ENCODE measurements at regions of chr7 and their contacts with region 1.

Region 1: GRCh38 chr7:112449902-112450806 is at the start of gene IFRD1:
- DNase-seq: peak; percentile 94
- ATAC-seq: peak; percentile 83
- H3K4me3 ChIP-seq: peak within 1 kb of the TSS; percentile 95
- H3K27ac ChIP-seq: peak within 1 kb of the TSS; percentile 92
- H3K4me1 ChIP-seq: peaks cover 4% of the 10 kb centered on the region; the same call in 1 of the 2 replicates
- H3K27me3 ChIP-seq: no peaks in the 10 kb centered on the region
- CTCF ChIP-seq: no peak
- EP300 ChIP-seq: no peak
- POLR2A ChIP-seq: peak; percentile 98
- RAD21 ChIP-seq: no peak
- polyA plus RNA-seq, gene IFRD1: 9.6 to 12.0 TPM

Region 2: DNA sequence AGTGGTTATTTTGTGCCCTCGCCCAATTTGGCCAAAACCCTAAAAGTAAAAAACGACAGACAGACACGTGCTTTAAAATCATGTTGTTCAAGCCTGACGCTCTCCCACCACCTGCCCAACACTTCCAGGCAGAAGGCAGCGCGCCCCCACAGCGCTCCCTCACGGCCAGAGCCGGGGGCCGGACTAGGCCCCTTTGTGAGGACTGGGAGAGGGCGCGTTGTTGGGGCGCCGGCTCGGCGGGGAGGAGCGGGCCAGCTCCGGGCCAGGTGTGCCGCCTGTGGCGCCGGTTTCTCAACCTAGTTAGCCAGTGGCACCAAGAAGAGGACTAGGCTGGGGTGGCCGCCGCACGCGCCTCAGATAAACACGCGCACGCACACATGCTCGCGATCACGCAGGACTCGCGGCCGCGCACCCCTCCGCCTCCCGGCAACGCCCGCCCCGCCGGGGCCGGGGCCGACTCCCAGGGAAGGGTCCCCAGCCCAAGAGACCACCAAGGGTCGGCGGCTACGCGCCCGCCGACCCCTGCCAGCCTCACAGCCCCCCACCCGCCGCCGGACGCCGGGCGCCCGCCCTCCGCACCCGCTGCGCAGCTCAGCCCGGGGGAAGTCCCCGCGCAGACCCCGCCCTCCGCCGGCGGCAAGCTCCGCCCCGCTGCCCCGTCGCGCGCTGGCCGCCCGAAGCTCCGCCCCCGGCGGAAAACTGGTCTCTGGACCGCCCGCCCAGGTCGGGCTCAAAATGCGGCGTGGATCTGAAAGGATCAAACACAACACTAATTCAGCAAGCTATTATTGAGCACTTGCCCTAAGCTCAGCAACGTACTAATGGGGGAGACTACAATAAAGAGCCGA is 888.0 kb before region 1 on chr7 and contains the start of gene IMMP2L:
- CTCF ChIA-PET with region 1: no interaction called
- POLR2A ChIA-PET with region 1: no interaction called
- RAD21 ChIA-PET with region 1: no interaction called
- SMC1A ChIA-PET with region 1: no interaction called
- in situ Hi-C with region 1: no loop called
- intact Hi-C with region 1: loop called (anchors 10 kb)
- DNase-seq: peak; percentile 46
- ATAC-seq: peak; percentile 90
- H3K4me3 ChIP-seq: peak within 1 kb of the TSS; percentile 71
- H3K27ac ChIP-seq: peak within 1 kb of the TSS; percentile 84
- H3K4me1 ChIP-seq: peaks cover 11% of the 10 kb centered on the region
- H3K27me3 ChIP-seq: no peaks in the 10 kb centered on the region
- CTCF ChIP-seq: peak; percentile 41 to 51 (median 44); a peak in 4 of 6 replicates
- EP300 ChIP-seq: no peak
- POLR2A ChIP-seq: peak; percentile 83
- RAD21 ChIP-seq: peak; percentile 65
- polyA plus RNA-seq, gene IMMP2L: 41.8 to 46.3 TPM

Region 3: DNA sequence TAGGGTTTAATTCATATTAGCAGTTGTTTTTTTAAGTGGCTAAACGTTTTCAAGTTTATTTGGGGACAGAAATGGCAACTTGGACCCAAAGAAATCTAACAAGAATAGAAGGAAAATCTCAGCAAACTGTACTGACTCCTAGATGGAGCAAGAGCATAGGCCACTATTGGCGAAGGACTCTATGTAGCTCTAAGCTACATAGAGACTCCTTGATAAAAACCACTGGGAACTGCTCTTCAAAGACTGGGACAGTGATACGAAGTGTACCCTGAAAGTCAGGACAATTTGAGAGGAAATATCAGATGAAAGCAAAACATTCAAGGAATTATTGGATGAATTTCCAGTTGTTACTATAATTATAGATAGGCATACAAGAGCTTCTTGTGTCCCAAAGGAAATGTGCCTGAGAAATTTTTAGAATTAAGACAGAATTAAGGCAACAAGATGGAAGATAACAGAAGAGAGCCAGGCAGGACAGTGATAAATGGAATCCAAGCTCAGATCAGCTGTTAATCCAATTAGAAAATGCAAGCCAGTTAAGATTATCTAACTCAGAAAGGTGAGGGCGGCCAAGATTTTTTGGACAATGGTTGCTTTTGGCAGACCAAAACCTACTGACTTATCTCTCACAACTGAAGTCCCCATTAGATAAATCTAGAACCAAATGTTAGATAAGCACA is 103.6 kb before region 1 on chr7:
- CTCF ChIA-PET with region 1: no interaction called
- POLR2A ChIA-PET with region 1: no interaction called
- RAD21 ChIA-PET with region 1: no interaction called
- SMC1A ChIA-PET with region 1: no interaction called
- in situ Hi-C with region 1: no loop called
- intact Hi-C with region 1: no loop called
- DNase-seq: no peak
- ATAC-seq: no peak
- H3K4me3 ChIP-seq: no peak overlapping the region
- H3K27ac ChIP-seq: no peak overlapping the region
- H3K4me1 ChIP-seq: no peaks in the 10 kb centered on the region
- H3K27me3 ChIP-seq: no peaks in the 10 kb centered on the region
- CTCF ChIP-seq: no peak
- EP300 ChIP-seq: no peak
- POLR2A ChIP-seq: no peak
- RAD21 ChIP-seq: no peak

Region 4: DNA sequence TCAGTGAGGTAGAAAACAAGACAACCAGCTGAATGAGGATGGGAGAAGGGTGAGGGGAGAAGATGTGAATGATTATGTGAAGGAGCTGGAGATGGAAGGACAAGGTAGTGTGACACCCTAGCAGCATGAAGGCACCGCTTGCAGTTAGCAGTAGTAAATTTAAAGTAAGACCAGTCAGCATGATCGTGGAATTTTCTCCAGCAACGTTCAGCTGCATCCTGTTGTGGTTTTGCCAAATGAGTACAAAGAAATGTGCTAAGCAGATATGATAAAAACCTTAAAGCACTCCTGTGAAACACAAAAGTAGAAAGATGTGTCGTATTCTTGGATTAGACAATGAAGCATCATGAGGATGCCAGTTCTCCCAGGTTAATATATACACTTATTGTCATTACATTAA is 34.0 kb before region 1 on chr7:
- CTCF ChIA-PET with region 1: no interaction called
- POLR2A ChIA-PET with region 1: no interaction called
- RAD21 ChIA-PET with region 1: no interaction called
- SMC1A ChIA-PET with region 1: no interaction called
- in situ Hi-C with region 1: no loop called
- intact Hi-C with region 1: no loop called
- DNase-seq: no peak
- ATAC-seq: no peak
- H3K4me3 ChIP-seq: no peak overlapping the region
- H3K27ac ChIP-seq: no peak overlapping the region
- H3K4me1 ChIP-seq: no peaks in the 10 kb centered on the region
- H3K27me3 ChIP-seq: no peaks in the 10 kb centered on the region; a peak in 1 of 4 replicates
- CTCF ChIP-seq: no peak
- EP300 ChIP-seq: no peak
- POLR2A ChIP-seq: no peak
- RAD21 ChIP-seq: no peak

Region 5: GRCh38 chr7:112431803-112432202 is 18.4 kb before region 1 on chr7:
- CTCF ChIA-PET with region 1: no interaction called
- POLR2A ChIA-PET with region 1: no interaction called
- RAD21 ChIA-PET with region 1: no interaction called
- SMC1A ChIA-PET with region 1: no interaction called
- in situ Hi-C with region 1: no loop called
- intact Hi-C with region 1: no loop called
- DNase-seq: no peak
- ATAC-seq: no peak
- H3K4me3 ChIP-seq: no peak overlapping the region
- H3K27ac ChIP-seq: no peak overlapping the region
- H3K4me1 ChIP-seq: no peaks in the 10 kb centered on the region
- H3K27me3 ChIP-seq: no peaks in the 10 kb centered on the region
- CTCF ChIP-seq: no peak
- EP300 ChIP-seq: no peak
- POLR2A ChIP-seq: no peak
- RAD21 ChIP-seq: no peak

Region 6: DNA sequence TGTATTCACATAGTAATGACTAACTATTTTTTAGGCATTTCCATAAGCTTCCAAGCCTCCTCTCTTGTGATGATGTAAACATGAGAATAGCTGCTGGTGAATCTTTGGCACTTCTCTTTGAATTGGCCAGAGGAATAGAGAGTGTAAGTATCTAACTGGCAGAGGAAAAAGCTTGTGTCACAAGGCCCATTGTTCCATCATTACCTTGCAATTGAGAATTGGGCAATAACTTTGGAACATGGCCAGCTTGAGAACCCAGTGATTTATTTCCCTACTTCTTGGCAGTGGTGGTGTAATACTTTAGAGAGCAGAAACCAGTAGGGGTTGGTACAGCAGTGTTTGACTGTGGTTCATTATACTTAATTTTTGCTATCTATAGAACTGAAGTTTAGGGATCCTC is 12.1 kb after region 1 on chr7:
- CTCF ChIA-PET with region 1: interaction called, 10 read pairs
- POLR2A ChIA-PET with region 1: interaction called, 14 read pairs
- RAD21 ChIA-PET with region 1: interaction called, 5 read pairs
- SMC1A ChIA-PET with region 1: interaction called, 13 read pairs
- in situ Hi-C with region 1: no loop called
- intact Hi-C with region 1: no loop called
- DNase-seq: no peak
- ATAC-seq: no peak
- H3K4me3 ChIP-seq: no peak overlapping the region
- H3K27ac ChIP-seq: no peak overlapping the region
- H3K4me1 ChIP-seq: no peaks in the 10 kb centered on the region
- H3K27me3 ChIP-seq: no peaks in the 10 kb centered on the region
- CTCF ChIP-seq: no peak
- EP300 ChIP-seq: no peak
- POLR2A ChIP-seq: no peak
- RAD21 ChIP-seq: no peak

Region 7: GRCh38 chr7:112495810-112496462 is 45.8 kb after region 1 on chr7:
- CTCF ChIA-PET with region 1: interaction called, 11 read pairs
- POLR2A ChIA-PET with region 1: interaction called, 4 read pairs
- RAD21 ChIA-PET with region 1: interaction called, 3 read pairs
- SMC1A ChIA-PET with region 1: interaction called, 4 read pairs
- in situ Hi-C with region 1: no loop called
- intact Hi-C with region 1: no loop called
- DNase-seq: no peak
- ATAC-seq: peak; percentile 83
- H3K4me3 ChIP-seq: no peak overlapping the region
- H3K27ac ChIP-seq: no peak overlapping the region
- H3K4me1 ChIP-seq: no peaks in the 10 kb centered on the region; the same call in 1 of the 2 replicates
- H3K27me3 ChIP-seq: no peaks in the 10 kb centered on the region
- CTCF ChIP-seq: peak; percentile 49 to 74 (median 60); a peak in 5 of 6 replicates
- EP300 ChIP-seq: no peak
- POLR2A ChIP-seq: no peak
- RAD21 ChIP-seq: peak; percentile 89

Region 8: GRCh38 chr7:113118074-113118959 is 668.2 kb after region 1 on chr7 and contains the start of gene SMIM30:
- CTCF ChIA-PET with region 1: no interaction called
- POLR2A ChIA-PET with region 1: no interaction called
- RAD21 ChIA-PET with region 1: no interaction called
- SMC1A ChIA-PET with region 1: interaction called, 3 read pairs
- in situ Hi-C with region 1: no loop called
- intact Hi-C with region 1: loop called (anchors 10 kb)
- DNase-seq: peak; percentile 61
- ATAC-seq: peak; percentile 99
- H3K4me3 ChIP-seq: peak within 1 kb of the TSS; percentile 79
- H3K27ac ChIP-seq: peak within 1 kb of the TSS; percentile 55
- H3K4me1 ChIP-seq: peaks cover 3% of the 10 kb centered on the region; the same call in 1 of the 2 replicates
- H3K27me3 ChIP-seq: no peaks in the 10 kb centered on the region
- CTCF ChIP-seq: no peak
- EP300 ChIP-seq: no peak
- POLR2A ChIP-seq: peak; percentile 73
- RAD21 ChIP-seq: no peak
- polyA plus RNA-seq, gene SMIM30: 197 to 258 TPM